ENCODE measurements at regions of chr4 and their contacts with region 1.

Region 1: GRCh38 chr4:74675673-74676279 is 118.5 kb downstream of the BTC start:
- DNase-seq: peak; percentile 70
- H3K4me3 ChIP-seq: no peak overlapping the region
- H3K27ac ChIP-seq: no peak overlapping the region
- H3K4me1 ChIP-seq: peaks cover 9% of the 10 kb centered on the region
- H3K27me3 ChIP-seq: no peaks in the 10 kb centered on the region
- CTCF ChIP-seq: peak; percentile 66 to 76
- POLR2A ChIP-seq: no peak

Region 2: GRCh38 chr4:74320559-74321118 is 355.1 kb before region 1 on chr4:
- CTCF ChIA-PET with region 1: interaction called, 378 read pairs
- POLR2A ChIA-PET with region 1: no interaction called
- dilution Hi-C with region 1: no loop called
- intact Hi-C with region 1: loop called (anchors 1 kb)
- DNase-seq: peak; percentile 74
- H3K4me3 ChIP-seq: no peak overlapping the region
- H3K27ac ChIP-seq: no peak overlapping the region
- H3K4me1 ChIP-seq: no peaks in the 10 kb centered on the region
- H3K27me3 ChIP-seq: no peaks in the 10 kb centered on the region
- CTCF ChIP-seq: peak; percentile 44
- POLR2A ChIP-seq: no peak

Region 3: DNA sequence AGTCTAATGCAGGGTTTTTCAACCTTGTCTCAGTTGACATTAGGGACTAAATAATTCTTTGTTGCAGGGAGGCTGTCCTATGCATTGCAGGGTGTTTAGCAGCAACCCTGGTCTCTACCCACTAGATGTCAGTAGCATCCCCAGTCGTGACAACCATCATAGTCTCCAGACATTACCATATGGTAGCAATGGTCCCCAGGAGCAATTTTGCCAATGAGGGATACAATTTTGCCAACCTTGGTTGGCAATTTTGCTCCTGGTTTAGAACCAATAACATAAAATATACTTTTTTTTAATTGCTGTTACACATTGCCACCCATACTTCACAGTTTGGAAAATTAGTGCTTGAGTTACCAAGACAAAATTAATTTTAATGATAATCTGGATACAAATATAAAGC is 304.9 kb before region 1 on chr4:
- CTCF ChIA-PET with region 1: interaction called, 96 read pairs
- POLR2A ChIA-PET with region 1: no interaction called
- dilution Hi-C with region 1: no loop called
- intact Hi-C with region 1: loop called (anchors 1 kb)
- DNase-seq: peak; percentile 60
- H3K4me3 ChIP-seq: no peak overlapping the region
- H3K27ac ChIP-seq: no peak overlapping the region
- H3K4me1 ChIP-seq: peaks cover 7% of the 10 kb centered on the region
- H3K27me3 ChIP-seq: no peaks in the 10 kb centered on the region
- CTCF ChIP-seq: peak; percentile 62 to 80
- POLR2A ChIP-seq: no peak

Region 4: DNA sequence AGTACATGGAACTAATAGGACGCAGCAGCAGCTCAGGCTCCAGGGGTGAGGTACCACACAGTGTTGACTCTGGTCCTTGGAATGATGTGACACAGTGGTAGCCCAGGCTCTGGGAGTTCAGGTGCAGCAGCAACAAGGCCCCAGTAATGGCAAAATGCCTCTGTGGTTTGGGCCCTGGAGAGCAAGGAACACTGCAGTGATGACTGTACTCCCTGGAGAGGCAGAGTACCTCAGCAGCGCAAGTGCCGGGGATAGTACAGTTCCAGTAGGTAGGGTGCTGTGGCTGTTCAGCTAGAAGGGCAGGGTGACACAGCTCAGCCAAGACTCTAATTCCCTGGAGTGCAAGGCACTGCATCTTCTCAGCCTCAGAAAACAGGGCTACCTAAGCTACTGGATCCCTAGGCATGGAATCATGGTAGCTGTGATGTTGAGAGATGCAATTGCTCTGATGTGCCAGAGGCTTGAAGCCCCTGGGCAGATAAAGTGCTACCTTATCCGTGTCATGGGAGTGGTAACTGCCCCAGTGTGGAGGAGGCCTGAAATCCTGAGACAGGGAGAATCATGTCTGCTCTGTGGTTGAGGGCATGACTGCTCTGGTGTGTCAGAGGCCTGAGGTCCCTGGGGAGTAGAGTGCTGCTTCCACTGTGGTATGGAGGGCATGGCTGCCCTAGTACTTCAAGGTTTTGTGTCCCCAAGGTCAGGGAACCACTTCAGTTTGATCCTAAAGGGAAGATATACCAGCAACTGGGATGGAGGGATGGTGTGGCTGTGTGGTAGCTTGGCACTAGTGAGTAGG is 175.6 kb before region 1 on chr4:
- CTCF ChIA-PET with region 1: interaction called, 10 read pairs
- POLR2A ChIA-PET with region 1: no interaction called
- dilution Hi-C with region 1: no loop called
- intact Hi-C with region 1: loop called (anchors 1 kb)
- DNase-seq: no peak
- H3K4me3 ChIP-seq: no peak overlapping the region
- H3K27ac ChIP-seq: no peak overlapping the region
- H3K4me1 ChIP-seq: peaks cover 23% of the 10 kb centered on the region
- H3K27me3 ChIP-seq: no peaks in the 10 kb centered on the region
- CTCF ChIP-seq: no peak
- POLR2A ChIP-seq: no peak

Region 5: GRCh38 chr4:74623041-74623440 is 52.7 kb before region 1 on chr4:
- CTCF ChIA-PET with region 1: interaction called, 66 read pairs
- POLR2A ChIA-PET with region 1: no interaction called
- dilution Hi-C with region 1: no loop called
- intact Hi-C with region 1: loop called (anchors 1 kb)
- DNase-seq: peak; percentile 79
- H3K4me3 ChIP-seq: no peak overlapping the region
- H3K27ac ChIP-seq: peak overlapping the region; percentile 98
- H3K4me1 ChIP-seq: peaks cover 87% of the 10 kb centered on the region
- H3K27me3 ChIP-seq: no peaks in the 10 kb centered on the region
- CTCF ChIP-seq: peak; percentile 39 to 46
- POLR2A ChIP-seq: no peak

Measured in endothelial cell of umbilical vein (primary cell).